Calu3 (cell line): ENCODE measurements at regions of chr16 and their contacts with region 1.

Region 1: DNA sequence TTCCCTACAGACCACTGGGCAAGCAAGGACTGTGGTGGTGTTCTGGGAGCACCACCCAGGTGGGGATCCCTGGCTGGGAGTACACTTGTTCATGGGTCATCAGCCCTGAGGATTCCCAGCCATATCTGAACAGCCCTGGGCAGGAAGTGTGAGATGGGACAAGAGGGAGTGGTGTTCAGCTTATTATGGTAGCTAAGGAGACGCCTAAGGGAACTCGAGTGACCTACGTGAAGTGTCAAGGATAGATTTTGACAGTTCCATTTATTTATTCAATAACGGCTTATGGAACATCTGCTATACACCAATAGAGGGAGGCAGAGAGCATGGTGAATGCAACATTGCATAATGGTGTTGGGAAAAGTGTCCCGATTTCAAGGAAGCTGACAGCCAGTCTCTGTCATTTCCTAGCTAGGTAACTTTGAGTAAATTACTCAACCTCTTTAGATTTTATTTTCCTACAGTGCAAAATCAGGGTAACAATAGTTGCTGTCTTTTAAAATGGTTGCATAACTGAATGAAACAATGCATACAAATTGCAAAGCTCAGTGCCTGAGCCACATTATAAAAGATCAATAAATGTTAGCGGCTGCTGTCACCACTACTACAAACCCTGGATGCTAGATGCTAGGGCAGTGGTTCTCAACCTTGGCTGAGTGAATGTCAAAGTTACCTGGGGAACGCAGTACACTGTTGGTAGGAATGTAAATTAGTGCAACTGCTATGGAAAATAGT is 534.1 kb downstream of the GRIN2A start:
- DNase-seq: peak; percentile 53
- H3K4me3 Mint-ChIP-seq: no peak overlapping the region
- H3K27ac Mint-ChIP-seq: no peak overlapping the region
- H3K4me1 Mint-ChIP-seq: peaks cover 22% of the 10 kb centered on the region
- H3K27me3 Mint-ChIP-seq: no peaks in the 10 kb centered on the region
- CTCF ChIP-seq: peak; percentile 77

Region 2: DNA sequence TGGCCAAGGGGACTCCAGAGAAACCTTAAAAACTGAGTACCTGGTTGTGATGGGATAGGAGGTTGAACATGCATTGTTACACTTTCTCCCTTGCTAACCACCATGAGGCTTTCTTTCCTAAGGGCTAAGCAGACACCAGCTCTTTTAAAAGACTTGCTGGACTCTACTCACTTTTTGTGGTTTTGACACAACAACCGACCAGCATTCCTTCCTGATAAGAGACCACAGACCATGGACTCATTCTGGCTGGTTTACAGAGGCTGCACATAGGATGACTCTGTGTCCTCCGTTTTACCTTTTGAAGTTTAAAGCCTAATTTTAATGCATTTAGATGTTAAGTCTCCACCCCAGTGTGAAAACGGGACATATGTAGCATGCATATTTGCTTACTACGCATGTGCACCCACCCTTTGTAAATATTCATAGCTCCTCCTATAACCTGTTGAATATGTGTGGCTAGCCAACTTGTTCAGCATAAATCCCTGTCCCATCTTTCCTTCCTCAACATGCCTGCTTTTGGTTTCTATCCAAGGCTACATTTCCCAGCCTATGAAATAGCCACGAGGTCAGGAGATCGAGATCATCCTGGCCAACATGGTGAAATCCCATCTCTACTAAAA is 58.2 kb after region 1 on chr16:
- CTCF ChIA-PET with region 1: interaction called, 8 read pairs
- intact Hi-C with region 1: loop called (anchors 5 kb)
- DNase-seq: peak; percentile 55
- H3K4me3 Mint-ChIP-seq: peak overlapping the region; percentile 10
- H3K27ac Mint-ChIP-seq: peak overlapping the region; percentile 14
- H3K4me1 Mint-ChIP-seq: peaks cover 43% of the 10 kb centered on the region
- H3K27me3 Mint-ChIP-seq: peaks cover 19% of the 10 kb centered on the region
- CTCF ChIP-seq: no peak

Region 3: DNA sequence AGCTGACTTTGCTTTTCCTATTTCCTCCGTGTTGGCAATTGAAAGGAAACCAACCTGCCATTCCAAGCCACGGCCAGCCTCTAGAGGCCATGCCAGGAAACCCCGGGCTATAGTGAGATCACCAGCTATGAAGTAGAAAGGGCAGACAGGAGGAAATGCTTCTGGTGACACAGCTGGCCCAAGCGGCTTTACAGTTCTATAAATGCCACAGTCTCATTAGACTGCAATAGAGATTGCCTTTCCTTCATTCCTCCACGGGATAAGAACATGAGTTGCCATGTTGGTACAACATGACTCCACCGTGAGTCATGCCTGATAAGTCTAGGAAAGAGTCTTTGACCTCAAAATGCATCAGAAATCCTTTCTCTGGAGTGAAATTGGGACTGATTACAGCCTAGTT is 149.2 kb after region 1 on chr16:
- CTCF ChIA-PET with region 1: interaction called, 7 read pairs
- intact Hi-C with region 1: loop called (anchors 1 kb)
- DNase-seq: peak; percentile 80
- H3K4me3 Mint-ChIP-seq: peak overlapping the region; percentile 46
- H3K27ac Mint-ChIP-seq: peak overlapping the region; percentile 93
- H3K4me1 Mint-ChIP-seq: peaks cover 28% of the 10 kb centered on the region
- H3K27me3 Mint-ChIP-seq: no peaks in the 10 kb centered on the region
- CTCF ChIP-seq: no peak

Region 4: DNA sequence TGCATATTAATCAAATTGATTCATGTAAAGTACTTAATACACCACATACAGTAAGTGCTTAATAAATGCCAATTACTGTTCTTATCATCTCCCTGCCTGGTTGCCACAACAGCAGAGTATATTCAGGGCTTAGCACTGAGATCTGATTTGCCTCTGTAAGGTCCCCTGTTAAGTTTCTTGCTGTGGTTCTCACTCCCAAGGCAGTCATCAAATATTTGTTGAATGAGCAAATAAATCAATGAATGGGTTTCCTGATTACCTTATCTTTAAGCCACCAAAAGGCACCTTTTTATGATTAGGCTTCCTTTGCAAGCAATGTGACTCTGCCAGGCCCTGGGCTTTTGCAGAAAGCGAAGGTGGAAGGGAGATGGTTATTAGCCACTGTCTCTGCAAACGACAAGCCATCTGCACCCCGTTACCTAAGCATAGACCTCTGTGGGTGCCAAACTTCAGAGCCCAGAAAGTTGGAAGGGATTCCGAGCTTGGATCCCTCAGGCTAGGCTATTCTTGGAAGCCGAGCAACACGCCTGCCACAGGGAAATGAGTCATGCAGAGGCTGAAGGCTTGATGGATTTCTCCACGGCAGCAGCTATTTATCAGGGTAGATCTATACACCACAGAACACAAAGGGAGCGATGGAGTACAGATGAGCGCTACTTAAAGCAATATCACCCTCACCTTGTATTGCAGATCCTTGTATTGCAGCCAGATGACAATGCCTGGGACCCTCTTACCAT is 432.1 kb after region 1 on chr16:
- CTCF ChIA-PET with region 1: interaction called, 4 read pairs
- intact Hi-C with region 1: loop called (anchors 5 kb)
- DNase-seq: peak; percentile 81
- H3K4me3 Mint-ChIP-seq: peak overlapping the region; percentile 54
- H3K27ac Mint-ChIP-seq: peak overlapping the region; percentile 94
- H3K4me1 Mint-ChIP-seq: peaks cover 88% of the 10 kb centered on the region
- H3K27me3 Mint-ChIP-seq: no peaks in the 10 kb centered on the region
- CTCF ChIP-seq: no peak

Region 5: GRCh38 chr16:10122546-10122945 is 474.4 kb after region 1 on chr16:
- CTCF ChIA-PET with region 1: interaction called, 4 read pairs
- intact Hi-C with region 1: loop called (anchors 5 kb)
- DNase-seq: peak; percentile 72
- H3K4me3 Mint-ChIP-seq: peak overlapping the region; percentile 46
- H3K27ac Mint-ChIP-seq: peak overlapping the region; percentile 83
- H3K4me1 Mint-ChIP-seq: peaks cover 68% of the 10 kb centered on the region
- H3K27me3 Mint-ChIP-seq: no peaks in the 10 kb centered on the region
- CTCF ChIP-seq: peak; percentile 69